ENCODE measurements at regions of chr6 and their contacts with region 1.

Region 1: GRCh38 chr6:26156076-26156849 is 69.0 kb downstream of the HFE start:
- DNase-seq: peak; percentile 85 to 94 (median 91)
- H3K4me3 ChIP-seq: peak overlapping the region; percentile 49 to 99 (median 86)
- H3K27ac ChIP-seq: peak overlapping the region; percentile 59 to 98 (median 89)
- H3K27me3 ChIP-seq: no peaks in the 10 kb centered on the region
- CTCF ChIP-seq: peak in 24 of 56 donors; percentile 4 to 40 (median 20)

Region 2: DNA sequence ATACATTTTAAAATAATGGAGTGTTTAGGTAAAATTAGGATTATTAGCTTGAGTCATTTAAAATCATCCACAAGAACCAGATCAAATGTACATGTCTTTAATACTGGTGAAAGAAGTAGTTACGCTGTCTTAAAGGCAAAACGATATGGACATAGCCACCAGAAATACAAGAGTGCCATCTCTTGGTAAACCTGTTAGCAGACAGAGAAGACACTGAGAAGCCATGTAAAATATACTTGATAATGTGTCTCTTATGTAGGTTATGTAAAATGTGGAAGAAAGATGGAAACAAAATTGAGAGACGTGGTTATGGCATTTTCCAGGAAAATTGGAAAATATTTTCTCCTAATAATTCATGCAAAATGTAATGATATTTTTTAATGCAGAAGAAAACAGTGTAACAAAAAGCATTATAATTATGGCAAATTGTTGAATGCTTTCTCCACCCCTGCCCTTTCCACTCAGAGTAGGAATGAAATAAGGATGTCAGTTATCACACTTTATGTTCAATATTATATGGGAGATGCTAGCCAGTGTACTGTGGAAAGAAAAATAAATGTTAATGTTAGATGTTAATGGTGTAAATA is 213.6 kb before region 1 on chr6:
- intact Hi-C with region 1: no loop called
- DNase-seq: no peak
- H3K4me3 ChIP-seq: no peak overlapping the region
- H3K27ac ChIP-seq: no peak overlapping the region
- H3K27me3 ChIP-seq: no peaks in the 10 kb centered on the region
- CTCF ChIP-seq: peak in 48 of 56 donors; percentile 15 to 65 (median 38)

Region 3: DNA sequence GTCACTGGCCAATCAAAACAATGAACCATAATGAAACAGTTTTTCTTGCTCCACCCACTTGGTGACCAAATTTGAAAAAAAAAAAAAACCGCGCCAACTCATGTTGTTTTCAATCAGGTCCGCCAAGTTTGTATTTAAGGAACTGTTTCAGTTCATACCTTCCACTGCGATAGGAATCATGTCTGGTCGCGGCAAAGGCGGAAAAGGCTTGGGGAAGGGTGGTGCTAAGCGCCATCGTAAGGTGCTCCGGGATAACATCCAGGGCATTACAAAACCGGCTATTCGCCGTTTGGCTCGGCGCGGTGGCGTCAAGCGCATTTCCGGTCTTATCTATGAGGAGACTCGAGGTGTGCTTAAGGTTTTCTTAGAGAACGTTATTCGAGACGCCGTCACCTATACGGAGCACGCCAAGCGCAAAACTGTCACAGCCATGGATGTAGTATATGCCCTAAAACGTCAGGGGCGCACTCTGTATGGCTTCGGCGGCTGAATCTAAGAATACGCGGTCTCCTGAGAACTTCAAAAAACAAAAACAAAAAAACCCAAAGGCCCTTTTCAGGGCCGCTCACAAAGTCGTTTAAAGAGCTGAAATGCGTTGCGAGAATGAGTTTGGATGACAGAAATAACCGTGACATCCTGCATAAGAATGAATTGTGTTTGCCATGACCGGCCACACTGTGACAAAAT is 52.4 kb before region 1 on chr6:
- intact Hi-C with region 1: loop called in 1 of 2 experiments (anchors 10 kb)
- DNase-seq: peak; percentile 69 to 93 (median 87)
- H3K4me3 ChIP-seq: peak overlapping the region; percentile 41 to 86 (median 70)
- H3K27ac ChIP-seq: peak overlapping the region in 58 of 59 donors; percentile 24 to 94 (median 84)
- H3K27me3 ChIP-seq: no peaks in the 10 kb centered on the region
- CTCF ChIP-seq: peak in 44 of 56 donors; percentile 14 to 54 (median 32)

Region 4: GRCh38 chr6:26122793-26123674 is 33.2 kb before region 1 on chr6:
- intact Hi-C with region 1: loop called (anchors 1 kb)
- DNase-seq: peak; percentile 70 to 96 (median 91)
- H3K4me3 ChIP-seq: peak overlapping the region; percentile 64 to 99 (median 91)
- H3K27ac ChIP-seq: peak overlapping the region; percentile 82 to 99 (median 97)
- H3K27me3 ChIP-seq: no peaks in the 10 kb centered on the region
- CTCF ChIP-seq: peak in 16 of 56 donors; percentile 5 to 36 (median 15)

Region 5: DNA sequence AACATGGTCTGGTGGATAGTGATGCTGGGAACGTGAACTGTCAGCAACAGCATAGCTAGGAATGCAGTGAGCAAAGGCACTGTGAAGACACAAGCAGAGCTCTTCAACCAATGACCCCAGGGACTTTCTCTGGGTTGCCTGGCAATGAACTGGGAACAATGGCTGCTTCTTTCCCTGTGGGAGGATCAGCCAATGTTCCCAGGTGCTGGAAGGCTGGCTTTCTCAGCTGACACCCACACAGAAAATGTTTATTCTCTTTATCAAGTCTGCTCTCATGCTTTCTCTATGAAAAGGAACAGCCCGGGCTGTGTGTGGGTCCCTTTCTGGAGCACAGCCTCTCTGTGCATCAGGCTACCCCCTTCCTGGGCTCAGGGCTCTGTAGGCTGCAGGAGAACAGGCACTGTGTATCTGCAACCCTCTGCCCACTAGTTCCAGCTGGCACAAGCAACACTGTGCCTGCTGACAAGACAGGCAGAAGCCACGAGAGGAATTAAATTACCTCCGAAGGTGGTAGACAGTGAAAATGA is 14.8 kb before region 1 on chr6:
- intact Hi-C with region 1: loop called in 1 of 2 experiments (anchors 1 kb)
- DNase-seq: peak in 9 of 10 donors; percentile 42 to 89 (median 78)
- H3K4me3 ChIP-seq: peak overlapping the region in 34 of 59 donors; percentile 0 to 52 (median 21)
- H3K27ac ChIP-seq: peak overlapping the region; percentile 67 to 97 (median 91)
- H3K27me3 ChIP-seq: no peaks in the 10 kb centered on the region
- CTCF ChIP-seq: no peak

Region 6: DNA sequence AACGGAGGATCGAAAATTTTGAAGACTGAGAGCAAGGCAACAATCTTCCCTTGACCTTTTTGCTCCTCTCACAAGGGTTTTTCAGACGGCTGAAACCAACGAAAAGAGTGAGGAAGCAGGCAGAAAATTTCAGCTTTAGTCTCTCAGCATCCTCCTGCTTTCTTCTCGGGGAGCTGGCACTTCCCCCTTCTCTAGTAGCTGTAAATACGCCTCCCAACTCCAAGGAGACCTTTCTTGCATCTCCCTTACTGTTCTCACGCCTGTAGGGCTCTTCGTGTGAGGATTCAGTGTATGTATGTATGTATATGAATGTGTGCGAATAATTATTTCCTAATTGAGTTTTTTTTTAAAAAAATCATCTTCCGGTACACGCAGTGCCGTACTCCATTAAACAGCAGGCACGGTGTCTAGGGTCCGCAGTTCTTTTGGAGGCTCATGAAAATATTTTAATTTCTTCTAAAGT is 16.3 kb after region 1 on chr6:
- intact Hi-C with region 1: loop called (anchors 2 kb)
- DNase-seq: no peak
- H3K4me3 ChIP-seq: peak overlapping the region; percentile 42 to 86 (median 70)
- H3K27ac ChIP-seq: peak overlapping the region in 58 of 59 donors; percentile 68 to 98 (median 92)
- H3K27me3 ChIP-seq: no peaks in the 10 kb centered on the region
- CTCF ChIP-seq: peak in 2 of 56 donors; percentile 2 to 10

Region 7: GRCh38 chr6:26196846-26197648 is 40.8 kb after region 1 on chr6:
- intact Hi-C with region 1: loop called in 1 of 2 experiments (anchors 5 kb)
- DNase-seq: peak in 9 of 10 donors; percentile 61 to 85 (median 80)
- H3K4me3 ChIP-seq: peak overlapping the region; percentile 52 to 86 (median 74)
- H3K27ac ChIP-seq: peak overlapping the region in 57 of 59 donors; percentile 21 to 93 (median 80)
- H3K27me3 ChIP-seq: peaks cover 0 to 18% (median 0%) of the 10 kb centered on the region in 45 donors
- CTCF ChIP-seq: peak in 7 of 56 donors; percentile 4 to 26 (median 19)

Region 8: GRCh38 chr6:26204332-26205165 is 48.3 kb after region 1 on chr6:
- intact Hi-C with region 1: loop called (anchors 2 to 5 kb)
- DNase-seq: peak; percentile 90 to 99 (median 96)
- H3K4me3 ChIP-seq: peak overlapping the region; percentile 57 to 100 (median 82)
- H3K27ac ChIP-seq: peak overlapping the region; percentile 73 to 99 (median 94)
- H3K27me3 ChIP-seq: peaks cover 0 to 18% (median 0%) of the 10 kb centered on the region in 45 donors
- CTCF ChIP-seq: peak in 51 of 56 donors; percentile 20 to 71 (median 51)

Measured in dorsolateral prefrontal cortex (tissue), 120 donors.